Naive thymus-derived CD4-positive, alpha-beta T cell (primary cell): ENCODE measurements at regions of chr7 and their contacts with region 1.

Region 1: DNA sequence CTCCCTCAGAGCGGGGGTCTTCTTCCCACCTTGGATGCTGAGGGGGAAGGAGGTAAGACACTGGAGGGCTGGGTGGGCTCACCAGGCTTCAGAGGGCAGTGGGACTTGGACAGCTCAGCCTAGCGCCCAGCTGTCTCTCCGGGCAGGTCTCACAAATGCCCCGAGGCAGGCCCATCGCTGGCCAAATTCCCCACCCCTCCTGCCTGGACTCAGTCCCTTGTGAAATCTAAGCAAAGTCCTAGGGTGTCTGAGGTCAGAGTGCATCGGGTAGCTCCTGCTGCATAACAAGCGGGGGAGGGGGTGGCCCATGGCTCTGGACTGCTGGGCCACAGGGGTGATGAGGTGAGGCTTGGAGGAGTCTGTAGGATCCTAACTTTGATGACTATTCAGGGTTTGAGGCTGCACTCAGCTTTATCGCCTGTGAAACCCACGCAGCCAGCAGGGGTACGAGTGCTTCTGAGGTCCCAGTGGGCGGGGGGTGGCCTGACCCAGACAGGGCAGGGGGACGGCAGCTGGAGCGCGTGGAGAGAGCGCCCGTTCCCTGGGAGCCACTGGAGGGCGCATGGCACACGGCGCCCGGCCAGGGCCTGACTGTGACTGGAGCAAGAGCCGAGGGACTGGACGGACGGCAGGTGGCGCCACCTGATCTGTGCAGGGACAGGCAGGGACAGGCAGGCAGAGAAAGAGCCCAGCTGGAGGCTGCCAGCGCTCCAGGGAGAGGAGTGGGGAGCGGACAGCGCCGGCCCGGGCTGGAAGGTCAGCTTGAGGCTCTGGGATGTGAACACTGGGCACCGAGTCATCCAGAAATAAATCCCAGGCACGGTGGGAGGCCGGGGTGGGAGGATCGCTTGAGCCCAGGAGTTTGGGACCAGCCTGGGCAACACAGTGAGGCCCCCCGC is 10.0 kb downstream of the CYP2W1 start:
- DNase-seq: peak; percentile 78 to 90 (median 89)
- ATAC-seq: peak; percentile 100
- H3K4me3 ChIP-seq: no peak overlapping the region
- H3K4me3 Mint-ChIP-seq: peak overlapping the region in 1 of 10 donors; percentile 16
- H3K27ac ChIP-seq: no peak overlapping the region
- H3K27ac Mint-ChIP-seq: peak overlapping the region in 2 of 9 donors; percentile 28 to 51
- H3K4me1 ChIP-seq: peaks cover 4 to 5% of the 10 kb centered on the region in 2 donors
- H3K4me1 Mint-ChIP-seq: peaks cover 0 to 6% (median 5%) of the 10 kb centered on the region in 7 donors
- H3K27me3 ChIP-seq: no peaks in the 10 kb centered on the region
- H3K27me3 Mint-ChIP-seq: no peaks in the 10 kb centered on the region

Region 2: GRCh38 chr7:909358-910329 is 83.3 kb before region 1 on chr7:
- CTCF ChIA-PET with region 1: interaction called, 10 read pairs
- POLR2A ChIA-PET with region 1: no interaction called
- intact Hi-C with region 1: loop called in 1 of 2 experiments (anchors 1 kb)
- DNase-seq: peak in 3 of 9 donors; percentile 19 to 37 (median 29)
- ATAC-seq: peak; percentile 63
- H3K4me3 ChIP-seq: peak overlapping the region; percentile 9
- H3K4me3 Mint-ChIP-seq: peak overlapping the region in 9 of 10 donors; percentile 60 to 82 (median 77)
- H3K27ac ChIP-seq: no peak overlapping the region
- H3K27ac Mint-ChIP-seq: peak overlapping the region in 7 of 9 donors; percentile 28 to 80 (median 76)
- H3K4me1 ChIP-seq: peaks cover 0 to 11% of the 10 kb centered on the region in 2 donors
- H3K4me1 Mint-ChIP-seq: peaks cover 0 to 13% (median 10%) of the 10 kb centered on the region in 7 donors
- H3K27me3 ChIP-seq: no peaks in the 10 kb centered on the region
- H3K27me3 Mint-ChIP-seq: peaks cover 0 to 2% (median 0%) of the 10 kb centered on the region in 5 donors

Region 3: DNA sequence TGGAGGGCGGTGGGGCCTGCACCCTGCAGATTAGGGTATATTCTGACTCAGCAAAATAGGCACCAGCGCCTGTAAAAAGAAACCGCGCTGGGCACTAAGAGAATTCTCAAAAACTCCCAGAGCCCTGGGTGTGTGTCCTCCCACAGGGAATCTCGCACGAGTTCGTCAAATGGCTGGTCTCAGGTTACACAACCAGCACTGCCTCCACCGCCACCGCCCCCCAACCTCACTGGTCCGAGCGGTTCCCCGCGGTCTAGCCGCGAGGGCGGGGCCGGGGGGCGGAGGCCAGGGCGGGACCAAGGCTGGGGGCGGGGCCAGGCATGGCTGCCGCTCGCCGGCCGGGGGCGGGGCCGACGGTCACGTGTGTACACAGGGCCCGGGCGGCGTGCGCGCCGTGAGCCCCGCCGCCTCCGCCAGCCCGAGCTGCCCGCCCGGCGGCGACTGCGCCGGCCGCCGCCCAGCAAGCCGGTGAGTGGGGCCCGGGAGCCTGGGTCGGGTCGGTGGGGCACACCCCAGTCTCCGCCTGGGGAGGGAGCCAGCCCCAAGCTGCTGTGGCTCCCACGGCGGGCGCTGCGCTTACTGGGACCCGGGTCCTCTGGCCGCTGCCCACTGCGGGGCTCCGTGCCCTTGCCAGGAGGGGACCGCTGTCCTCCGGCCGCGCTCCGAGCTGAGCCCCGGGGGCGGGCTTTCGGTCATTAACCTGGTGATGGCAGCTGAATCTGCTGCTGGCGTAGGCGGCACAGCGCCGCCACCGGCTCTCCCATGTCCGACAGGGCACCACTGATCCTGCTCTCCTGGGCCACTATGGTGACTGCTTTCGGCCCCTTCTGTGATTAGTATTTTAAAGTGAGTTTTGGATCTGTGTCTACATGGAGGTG is 51.5 kb after region 1 on chr7 and contains the start of gene GPR146:
- CTCF ChIA-PET with region 1: interaction called, 28 read pairs
- POLR2A ChIA-PET with region 1: interaction called, 4 read pairs
- intact Hi-C with region 1: loop called (anchors 1 to 5 kb)
- DNase-seq: peak; percentile 73 to 97 (median 86)
- ATAC-seq: peak; percentile 96
- H3K4me3 ChIP-seq: peak within 1 kb of the TSS; percentile 79
- H3K4me3 Mint-ChIP-seq: peak within 1 kb of the TSS; percentile 88 to 94 (median 91)
- H3K27ac ChIP-seq: peak within 1 kb of the TSS; percentile 83
- H3K27ac Mint-ChIP-seq: peak within 1 kb of the TSS; percentile 62 to 93 (median 85)
- H3K4me1 ChIP-seq: peaks cover 49 to 54% of the 10 kb centered on the region in 2 donors
- H3K4me1 Mint-ChIP-seq: peaks cover 42 to 75% (median 56%) of the 10 kb centered on the region in 7 donors
- H3K27me3 ChIP-seq: no peaks in the 10 kb centered on the region
- H3K27me3 Mint-ChIP-seq: peaks cover 0 to 13% (median 0%) of the 10 kb centered on the region in 5 donors
- total RNA-seq, gene GPR146: 10.1 to 26.5 (median 15.9) TPM

Region 4: DNA sequence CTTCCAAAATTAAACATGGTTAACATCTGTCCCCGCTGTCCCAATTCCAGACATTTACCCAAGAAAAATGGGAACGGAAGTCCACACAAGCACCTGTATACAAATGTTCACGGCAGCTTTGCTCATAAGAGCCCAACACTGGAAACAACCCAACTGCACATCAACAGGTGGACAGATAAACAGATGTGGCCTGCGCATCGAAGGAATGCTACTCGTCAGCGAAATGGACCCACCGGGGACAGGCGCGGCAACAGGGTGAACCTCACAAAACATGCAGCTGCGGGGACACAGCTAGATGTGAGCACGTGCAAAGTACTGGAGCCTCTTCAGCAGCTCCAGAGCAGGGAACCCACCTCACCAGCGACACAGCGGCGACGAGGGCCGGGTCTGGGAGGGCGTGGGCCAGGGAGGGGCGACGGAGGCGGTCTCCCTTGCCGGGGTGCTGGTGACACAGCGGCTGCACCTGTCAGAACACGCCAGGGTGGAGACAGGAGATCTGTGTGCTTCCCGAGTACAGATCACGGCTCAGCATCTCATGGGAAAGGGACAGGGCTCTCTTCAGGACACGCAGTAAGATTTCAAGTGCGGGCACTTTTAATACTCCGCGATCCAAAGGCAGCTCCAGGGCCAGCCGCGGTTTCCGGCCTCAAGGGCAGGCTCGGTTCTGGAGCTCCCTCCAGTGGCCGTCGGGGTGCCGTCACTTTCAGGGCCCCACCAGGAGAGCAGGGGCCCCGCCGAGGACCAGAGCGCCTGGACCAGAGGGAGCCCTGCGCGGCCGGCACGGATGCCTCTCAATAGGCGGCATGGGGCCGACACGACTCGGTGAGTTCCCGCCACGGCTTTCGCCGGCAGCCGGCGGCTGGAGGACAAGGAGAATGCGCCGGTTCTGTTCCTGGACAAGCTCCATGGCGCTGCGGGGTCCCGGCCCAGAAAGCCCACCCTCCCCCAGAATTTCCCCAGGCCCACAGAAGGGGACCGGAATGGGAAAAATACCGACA is 72.6 kb after region 1 on chr7:
- CTCF ChIA-PET with region 1: interaction called, 170 read pairs
- POLR2A ChIA-PET with region 1: interaction called, 25 read pairs
- intact Hi-C with region 1: loop called (anchors 1 kb)
- DNase-seq: peak; percentile 66 to 87 (median 81)
- ATAC-seq: peak; percentile 96
- H3K4me3 ChIP-seq: peak overlapping the region; percentile 54
- H3K4me3 Mint-ChIP-seq: peak overlapping the region; percentile 62 to 83 (median 74)
- H3K27ac ChIP-seq: no peak overlapping the region
- H3K27ac Mint-ChIP-seq: peak overlapping the region in 2 of 9 donors; percentile 24 to 32
- H3K4me1 ChIP-seq: peaks cover 6 to 9% of the 10 kb centered on the region in 2 donors
- H3K4me1 Mint-ChIP-seq: peaks cover 6 to 16% (median 9%) of the 10 kb centered on the region in 7 donors
- H3K27me3 ChIP-seq: no peaks in the 10 kb centered on the region
- H3K27me3 Mint-ChIP-seq: peaks cover 0 to 3% (median 0%) of the 10 kb centered on the region in 5 donors

Region 5: DNA sequence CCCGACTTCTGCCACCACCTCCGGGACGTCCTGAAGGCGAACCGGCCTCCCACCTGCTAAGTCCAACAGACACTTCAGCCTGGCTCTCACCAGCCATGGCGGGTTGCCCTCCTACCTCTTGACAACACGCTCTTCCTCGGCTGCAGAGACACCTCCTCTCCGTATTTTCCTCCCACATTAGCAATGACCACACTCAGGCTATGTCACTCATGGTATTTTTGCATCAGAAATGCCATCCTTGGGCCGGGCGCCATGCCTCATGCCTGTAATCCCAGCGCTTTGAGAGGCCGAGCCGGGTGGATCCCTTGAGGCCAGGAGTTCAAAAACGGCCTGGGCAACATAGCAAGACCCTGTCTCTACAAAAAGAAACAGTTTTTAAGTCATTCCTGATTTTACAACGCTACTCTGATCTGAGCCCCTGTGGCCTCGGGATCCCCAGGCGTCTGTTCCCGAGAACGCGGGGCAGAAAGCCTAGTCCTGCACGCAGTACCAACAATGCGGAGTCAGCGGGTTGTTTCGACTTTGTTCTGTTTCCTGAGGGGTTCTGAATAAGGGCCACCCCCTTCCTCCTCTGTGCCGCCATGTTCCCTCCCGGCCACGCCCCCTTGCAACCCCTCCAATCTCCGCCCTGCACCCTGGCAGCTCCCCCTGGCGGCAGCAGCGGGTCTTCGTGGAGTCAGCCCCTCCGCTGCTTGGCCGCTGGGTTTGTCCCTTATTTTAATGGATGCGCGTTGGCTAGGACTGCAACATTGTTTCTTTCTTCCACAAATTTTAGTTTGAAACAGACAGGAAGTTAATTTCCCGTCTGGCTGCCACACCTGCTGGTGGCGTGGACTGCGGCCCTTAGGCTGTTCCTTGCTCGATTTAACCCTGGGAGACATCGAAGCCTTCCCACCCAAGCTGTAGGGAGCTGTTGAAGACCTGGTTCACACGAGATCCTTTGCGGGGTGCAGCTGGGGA is 176.7 kb after region 1 on chr7:
- CTCF ChIA-PET with region 1: interaction called, 16 read pairs
- POLR2A ChIA-PET with region 1: interaction called, 3 read pairs
- intact Hi-C with region 1: loop called in 1 of 2 experiments (anchors 1 kb)
- DNase-seq: peak; percentile 81 to 95 (median 94)
- ATAC-seq: peak; percentile 100
- H3K4me3 ChIP-seq: peak overlapping the region; percentile 63
- H3K4me3 Mint-ChIP-seq: peak overlapping the region; percentile 82 to 92 (median 89)
- H3K27ac ChIP-seq: peak overlapping the region; percentile 64
- H3K27ac Mint-ChIP-seq: peak overlapping the region in 8 of 9 donors; percentile 88 to 98 (median 94)
- H3K4me1 ChIP-seq: peaks cover 5 to 8% of the 10 kb centered on the region in 2 donors
- H3K4me1 Mint-ChIP-seq: peaks cover 8 to 16% (median 13%) of the 10 kb centered on the region in 7 donors
- H3K27me3 ChIP-seq: no peaks in the 10 kb centered on the region
- H3K27me3 Mint-ChIP-seq: no peaks in the 10 kb centered on the region